CD8-positive, alpha-beta T cell (primary cell): ENCODE measurements at regions of chr13 and their contacts with region 1.

Region 1: DNA sequence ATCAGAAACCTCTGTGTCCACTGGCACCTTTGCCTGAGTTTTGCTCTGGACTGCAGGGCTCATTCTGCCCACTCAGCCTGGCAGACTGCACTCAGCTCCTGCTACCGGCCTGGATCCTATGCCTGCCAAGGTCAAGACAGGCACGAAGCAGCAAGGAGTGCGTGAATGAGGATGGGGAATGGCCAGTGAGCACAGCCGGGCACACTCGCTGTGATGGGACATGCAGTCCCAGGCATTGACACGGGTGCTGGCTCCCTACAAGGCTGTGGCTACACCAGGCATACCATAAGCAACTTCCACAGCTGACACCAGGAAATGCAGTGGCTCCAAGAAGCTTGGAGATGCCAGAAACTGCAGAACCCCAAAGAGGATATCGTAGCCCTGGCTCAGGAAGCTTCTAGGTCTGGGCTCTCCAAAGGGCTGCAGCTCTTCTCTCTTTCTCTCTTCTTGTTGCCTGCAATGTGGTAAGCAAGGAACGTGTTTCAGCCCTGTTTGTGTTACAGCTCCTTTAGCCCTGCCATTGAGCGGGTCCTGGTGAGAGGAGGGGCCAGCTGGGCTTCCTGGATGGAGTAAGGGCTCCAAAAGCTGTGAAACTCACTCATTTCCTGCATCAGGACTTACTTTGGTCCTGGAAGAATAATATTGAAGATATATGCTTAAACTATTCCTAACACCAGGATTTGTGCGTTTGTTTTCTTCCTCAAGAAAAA is 832.6 kb upstream of the SLITRK5 start:
- DNase-seq: no peak
- ATAC-seq: no peak
- H3K4me3 ChIP-seq: no peak overlapping the region
- H3K4me3 Mint-ChIP-seq: no peak overlapping the region
- H3K27ac ChIP-seq: no peak overlapping the region
- H3K27ac Mint-ChIP-seq: no peak overlapping the region
- H3K4me1 ChIP-seq: no peaks in the 10 kb centered on the region
- H3K4me1 Mint-ChIP-seq: no peaks in the 10 kb centered on the region
- H3K27me3 ChIP-seq: no peaks in the 10 kb centered on the region
- H3K27me3 Mint-ChIP-seq: no peaks in the 10 kb centered on the region
- CTCF ChIP-seq: no peak

Region 2: GRCh38 chr13:84870199-84870598 is 1968.4 kb before region 1 on chr13:
- CTCF ChIA-PET with region 1: no interaction called
- POLR2A ChIA-PET with region 1: no interaction called
- intact Hi-C with region 1: no loop called
- DNase-seq: no peak
- ATAC-seq: no peak
- H3K4me3 ChIP-seq: no peak overlapping the region
- H3K4me3 Mint-ChIP-seq: no peak overlapping the region
- H3K27ac ChIP-seq: no peak overlapping the region
- H3K27ac Mint-ChIP-seq: no peak overlapping the region
- H3K4me1 ChIP-seq: no peaks in the 10 kb centered on the region
- H3K4me1 Mint-ChIP-seq: no peaks in the 10 kb centered on the region
- H3K27me3 ChIP-seq: no peaks in the 10 kb centered on the region
- H3K27me3 Mint-ChIP-seq: peaks cover 3% of the 10 kb centered on the region
- CTCF ChIP-seq: no peak

Region 3: DNA sequence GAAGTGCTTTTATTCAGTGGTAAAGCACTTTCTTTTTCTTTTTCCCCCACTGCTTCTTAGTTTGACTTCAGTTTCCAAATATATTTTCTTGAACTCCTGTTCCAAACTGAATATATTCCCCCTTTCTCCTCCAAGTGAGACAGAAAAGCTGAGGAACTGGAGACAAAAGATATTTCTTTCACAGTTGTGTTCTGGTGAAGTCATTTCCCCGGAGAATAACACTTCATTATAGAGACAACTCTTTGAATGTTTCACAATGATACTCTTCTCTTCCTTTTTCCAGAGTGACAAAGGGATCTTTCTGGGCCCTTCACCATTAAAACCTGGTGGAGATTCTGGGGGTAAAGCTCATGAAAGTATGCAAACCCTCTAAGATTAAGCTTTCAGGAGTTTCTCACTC is 28.2 kb before region 1 on chr13:
- CTCF ChIA-PET with region 1: no interaction called
- POLR2A ChIA-PET with region 1: no interaction called
- intact Hi-C with region 1: no loop called
- DNase-seq: no peak
- ATAC-seq: no peak
- H3K4me3 ChIP-seq: no peak overlapping the region
- H3K4me3 Mint-ChIP-seq: no peak overlapping the region
- H3K27ac ChIP-seq: no peak overlapping the region
- H3K27ac Mint-ChIP-seq: no peak overlapping the region
- H3K4me1 ChIP-seq: no peaks in the 10 kb centered on the region
- H3K4me1 Mint-ChIP-seq: no peaks in the 10 kb centered on the region
- H3K27me3 ChIP-seq: no peaks in the 10 kb centered on the region
- H3K27me3 Mint-ChIP-seq: no peaks in the 10 kb centered on the region
- CTCF ChIP-seq: no peak

Region 4: GRCh38 chr13:86892330-86892729 is 53.8 kb after region 1 on chr13:
- CTCF ChIA-PET with region 1: no interaction called
- POLR2A ChIA-PET with region 1: no interaction called
- intact Hi-C with region 1: loop called in 1 of 2 experiments (anchors 10 kb)
- DNase-seq: no peak
- ATAC-seq: no peak
- H3K4me3 ChIP-seq: no peak overlapping the region
- H3K4me3 Mint-ChIP-seq: no peak overlapping the region
- H3K27ac ChIP-seq: no peak overlapping the region
- H3K27ac Mint-ChIP-seq: no peak overlapping the region
- H3K4me1 ChIP-seq: no peaks in the 10 kb centered on the region
- H3K4me1 Mint-ChIP-seq: no peaks in the 10 kb centered on the region
- H3K27me3 ChIP-seq: no peaks in the 10 kb centered on the region
- H3K27me3 Mint-ChIP-seq: no peaks in the 10 kb centered on the region
- CTCF ChIP-seq: no peak